ENCODE measurements at regions of chr14 and their contacts with region 1.

Region 1: GRCh38 chr14:72948481-72949138 is 22.3 kb downstream of the DCAF4 start:
- DNase-seq: peak; percentile 65
- CTCF ChIP-seq: peak; percentile 72

Region 2: GRCh38 chr14:72904840-72905561 is 43.6 kb before region 1 on chr14:
- CTCF ChIA-PET with region 1: interaction called, 20 read pairs
- POLR2A ChIA-PET with region 1: no interaction called
- DNase-seq: peak; percentile 59
- CTCF ChIP-seq: peak; percentile 89

Region 3: DNA sequence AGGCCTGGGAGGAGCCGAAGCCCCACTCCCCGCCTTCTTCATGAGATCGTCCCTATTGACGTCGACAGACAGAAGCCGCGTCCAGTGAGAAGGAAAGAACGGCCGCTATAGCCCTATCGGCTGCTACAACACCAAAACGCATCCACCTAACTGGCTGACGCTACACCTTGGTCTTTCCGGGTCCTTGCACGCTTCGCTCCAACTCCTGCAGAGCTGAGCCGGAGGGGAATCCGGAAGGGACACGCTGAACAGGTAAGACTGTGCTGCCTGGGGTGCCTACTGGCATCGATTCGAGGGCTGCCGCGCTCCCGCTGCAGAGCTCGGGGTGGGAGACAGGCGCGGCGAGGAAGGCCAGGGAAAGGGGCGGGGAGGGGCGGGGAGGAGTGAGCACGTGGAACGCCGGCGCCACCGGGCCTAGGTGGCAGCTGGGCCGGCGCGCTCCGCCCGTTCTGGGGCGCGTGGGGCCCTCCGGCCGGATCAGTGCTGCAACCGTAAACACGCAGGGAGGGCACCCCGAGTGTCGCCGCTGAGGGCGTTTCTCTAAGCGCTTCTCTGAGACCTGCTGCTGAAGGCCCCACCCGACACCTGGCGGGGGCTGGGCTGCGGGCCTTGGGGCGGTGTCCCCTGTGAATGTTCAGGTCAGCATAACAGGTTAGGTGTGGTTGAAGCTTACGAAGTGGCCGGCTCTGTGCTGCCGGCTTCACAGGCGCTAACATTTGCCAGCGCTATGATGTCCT is 22.1 kb before region 1 on chr14 and contains the start of gene DCAF4:
- CTCF ChIA-PET with region 1: interaction called, 15 read pairs
- POLR2A ChIA-PET with region 1: no interaction called
- DNase-seq: peak; percentile 99
- CTCF ChIP-seq: no peak

Region 4: GRCh38 chr14:72968316-72968715 is 19.7 kb after region 1 on chr14:
- CTCF ChIA-PET with region 1: interaction called, 23 read pairs
- POLR2A ChIA-PET with region 1: no interaction called
- DNase-seq: no peak
- CTCF ChIP-seq: no peak

Region 5: GRCh38 chr14:73014105-73014504 is 65.5 kb after region 1 on chr14:
- CTCF ChIA-PET with region 1: no interaction called
- POLR2A ChIA-PET with region 1: no interaction called
- DNase-seq: peak; percentile 71
- CTCF ChIP-seq: no peak

Region 6: DNA sequence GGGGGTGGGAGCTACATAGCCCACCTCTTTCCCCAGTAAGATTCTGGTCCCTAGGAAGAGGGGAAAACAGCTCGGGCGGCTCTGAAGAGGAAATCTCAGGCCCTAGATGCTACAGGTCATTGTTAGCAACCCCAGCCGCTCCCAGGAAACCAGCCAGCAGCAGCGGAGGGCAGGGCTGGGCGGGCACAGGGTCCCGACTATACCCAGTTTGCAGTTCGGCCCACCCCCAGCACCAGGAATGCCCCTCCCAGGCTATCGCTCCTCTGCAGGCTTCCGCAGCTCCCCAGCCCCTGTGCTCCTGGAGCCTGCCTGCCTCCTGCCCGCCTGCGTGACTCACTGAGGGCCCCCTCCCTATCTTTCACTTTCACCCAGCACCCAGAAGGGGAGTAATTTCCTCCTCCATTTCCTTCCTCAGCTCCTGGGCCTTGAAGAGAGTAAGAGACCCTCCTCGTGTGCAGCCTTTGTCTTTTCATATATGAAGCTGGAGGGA is 792.8 kb after region 1 on chr14:
- CTCF ChIA-PET with region 1: no interaction called
- POLR2A ChIA-PET with region 1: no interaction called
- DNase-seq: peak; percentile 75
- CTCF ChIP-seq: no peak